Ascending aorta (tissue), 2 donors: ENCODE measurements at regions of chr20 and their contacts with region 1.

Region 1: GRCh38 chr20:23441850-23442313 is 2.4 kb downstream of the CSTL1 start:
- DNase-seq: peak in 1 of 2 donors; percentile 79
- H3K4me3 ChIP-seq: no peak overlapping the region
- H3K27ac ChIP-seq: no peak overlapping the region
- H3K4me1 ChIP-seq: no peaks in the 10 kb centered on the region
- H3K27me3 ChIP-seq: no peaks in the 10 kb centered on the region
- CTCF ChIP-seq: peak; percentile 53 to 75 (median 72)

Region 2: DNA sequence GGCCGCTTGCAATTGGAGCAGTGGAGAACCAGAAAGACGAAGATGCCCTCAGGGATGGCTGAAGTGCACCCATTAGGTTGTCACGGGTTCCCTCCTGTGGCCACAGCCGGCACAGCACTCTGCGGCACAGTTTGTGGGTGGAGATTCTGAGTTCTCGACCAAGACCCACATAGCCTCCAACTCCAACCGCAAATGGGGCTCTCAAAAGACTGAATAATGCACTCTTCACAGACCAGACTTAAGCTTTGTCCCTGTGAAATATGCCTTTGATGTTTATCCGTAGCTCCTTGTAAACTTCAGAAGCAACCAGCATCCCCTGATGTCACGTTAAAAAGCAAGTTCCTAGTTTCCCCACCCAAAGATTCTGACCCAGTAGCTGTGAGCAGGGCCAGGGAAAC is 164.8 kb after region 1 on chr20:
- intact Hi-C with region 1: loop called (anchors 2 kb)
- DNase-seq: peak in 1 of 2 donors; percentile 90
- H3K4me3 ChIP-seq: no peak overlapping the region
- H3K27ac ChIP-seq: no peak overlapping the region
- H3K4me1 ChIP-seq: no peaks in the 10 kb centered on the region
- H3K27me3 ChIP-seq: no peaks in the 10 kb centered on the region
- CTCF ChIP-seq: peak; percentile 72 to 96 (median 91)

Region 3: GRCh38 chr20:23995905-23996666 is 554.2 kb after region 1 on chr20:
- intact Hi-C with region 1: loop called (anchors 5 kb)
- DNase-seq: no peak
- H3K4me3 ChIP-seq: no peak overlapping the region
- H3K27ac ChIP-seq: no peak overlapping the region
- H3K4me1 ChIP-seq: no peaks in the 10 kb centered on the region
- H3K27me3 ChIP-seq: no peaks in the 10 kb centered on the region
- CTCF ChIP-seq: peak; percentile 20 to 78 (median 65)

Region 4: DNA sequence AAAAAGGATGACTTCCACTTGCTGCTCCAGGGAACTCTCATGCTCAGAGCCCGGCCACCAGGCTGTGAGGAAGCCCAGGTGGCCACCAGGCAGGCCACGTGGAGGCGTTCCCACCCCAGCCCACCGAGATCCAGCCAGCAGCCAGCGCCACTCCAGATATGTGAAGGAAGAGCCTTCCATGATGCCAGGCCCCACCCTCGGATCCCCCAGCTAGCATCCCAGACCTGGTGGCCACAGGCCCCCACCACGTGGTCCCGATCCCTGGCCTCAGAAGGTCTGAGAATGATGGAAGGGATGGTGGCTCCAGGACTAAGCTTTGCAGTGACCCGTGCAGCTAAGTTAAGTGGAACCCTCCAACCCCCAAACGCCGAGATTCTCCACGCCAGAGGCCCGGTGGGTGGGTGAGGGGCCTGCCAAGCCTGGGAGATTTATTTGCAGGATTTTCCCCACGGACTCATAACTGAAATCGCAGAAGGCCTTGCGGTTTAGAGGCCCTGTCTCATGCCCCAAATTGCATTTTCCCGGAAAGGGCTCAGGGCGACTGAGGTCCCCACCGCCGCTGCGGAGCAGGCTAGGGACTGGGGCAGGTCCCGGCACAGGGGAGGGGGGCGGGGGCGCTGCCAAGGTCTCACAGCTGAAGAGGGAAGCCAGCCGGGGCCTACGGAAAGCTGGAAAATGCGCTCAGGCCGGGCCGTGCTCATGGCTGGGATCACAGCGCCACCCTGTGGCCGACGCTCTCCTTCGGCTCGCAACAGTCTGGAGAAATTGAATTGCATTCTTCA is 1476.1 kb after region 1 on chr20:
- intact Hi-C with region 1: loop called (anchors 5 kb)
- DNase-seq: peak in 1 of 2 donors; percentile 76
- H3K4me3 ChIP-seq: peak overlapping the region; percentile 30 to 40
- H3K27ac ChIP-seq: no peak overlapping the region
- H3K4me1 ChIP-seq: peaks cover 0 to 2% of the 10 kb centered on the region in 2 donors
- H3K27me3 ChIP-seq: no peaks in the 10 kb centered on the region
- CTCF ChIP-seq: peak; percentile 53 to 81 (median 74)